Cardiac septum (tissue), 1 donor: ENCODE measurements at regions of chr4 and their contacts with region 1.

Region 1: GRCh38 chr4:6087673-6088341 is 69.6 kb upstream of the C4orf50 start:
- DNase-seq: no peak

Region 2: GRCh38 chr4:5998333-5998936 is 89.4 kb before region 1 on chr4:
- intact Hi-C with region 1: loop called (anchors 5 kb)
- DNase-seq: peak; percentile 77

Region 3: GRCh38 chr4:6019316-6020263 is 68.2 kb before region 1 on chr4:
- intact Hi-C with region 1: no loop called
- DNase-seq: no peak

Region 4: GRCh38 chr4:6153874-6154273 is 66.1 kb after region 1 on chr4:
- intact Hi-C with region 1: no loop called
- DNase-seq: no peak